Heart left ventricle (tissue), 16 donors: ENCODE measurements at regions of chr2 and their contacts with region 1.

Region 1: DNA sequence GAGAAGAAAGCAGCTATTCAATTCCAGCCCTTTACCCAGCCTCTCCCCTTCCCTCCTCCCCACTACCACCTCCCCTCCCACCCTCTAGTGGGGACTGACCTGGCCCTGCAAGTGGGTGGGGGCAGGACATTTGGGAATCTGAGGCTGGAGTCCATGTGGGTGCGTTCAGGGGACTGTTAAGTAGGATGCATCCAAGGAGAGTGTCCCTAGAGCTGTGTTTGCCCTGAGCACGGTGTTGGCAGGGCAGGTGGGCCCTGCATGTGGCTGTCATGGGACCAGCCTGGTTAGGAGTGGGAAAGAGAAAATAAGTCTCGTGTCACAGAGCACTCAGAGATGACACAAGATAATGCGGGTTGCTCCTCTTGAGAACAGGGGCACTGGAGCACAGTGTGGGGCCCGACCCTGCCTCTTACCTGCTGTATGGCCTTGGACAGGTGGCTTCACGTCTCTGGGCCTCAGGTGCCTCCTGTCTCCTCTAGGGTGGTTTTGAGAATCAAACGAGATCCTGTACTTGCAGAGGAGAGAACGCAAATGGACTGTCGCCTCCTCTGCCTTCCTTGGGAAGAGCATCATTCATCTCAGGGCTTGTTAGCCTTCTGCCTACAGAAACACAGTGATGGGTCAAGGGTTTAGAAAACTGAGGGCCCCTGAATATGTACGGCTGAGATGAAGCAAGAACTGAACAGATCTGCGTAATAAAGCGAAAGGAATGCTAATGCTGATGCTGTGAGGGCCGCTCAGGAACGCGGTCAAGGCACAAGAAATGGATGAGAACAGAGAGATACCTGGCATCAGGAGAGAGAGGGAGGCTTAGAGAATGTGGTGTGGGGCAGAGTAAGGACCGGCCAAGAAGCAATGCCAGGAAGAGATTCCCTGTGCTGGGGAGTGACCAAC is 187.7 kb upstream of the HAAO start:
- DNase-seq: no peak
- ATAC-seq: no peak
- H3K4me3 ChIP-seq: no peak overlapping the region
- H3K27ac ChIP-seq: no peak overlapping the region
- H3K4me1 ChIP-seq: peaks cover 0 to 18% (median 5%) of the 10 kb centered on the region in 12 donors
- H3K27me3 ChIP-seq: no peaks in the 10 kb centered on the region
- CTCF ChIP-seq: no peak
- POLR2A ChIP-seq: no peak

Region 2: GRCh38 chr2:43018179-43019024 is 38.3 kb after region 1 on chr2:
- intact Hi-C with region 1: loop called (anchors 2 to 10 kb)
- DNase-seq: peak; percentile 73 to 91 (median 87)
- ATAC-seq: peak; percentile 50 to 95 (median 87)
- H3K4me3 ChIP-seq: no peak overlapping the region
- H3K27ac ChIP-seq: peak overlapping the region; percentile 71 to 89 (median 76)
- H3K4me1 ChIP-seq: peaks cover 0 to 30% (median 15%) of the 10 kb centered on the region in 12 donors
- H3K27me3 ChIP-seq: no peaks in the 10 kb centered on the region
- CTCF ChIP-seq: no peak
- POLR2A ChIP-seq: no peak